ENCODE measurements at regions of chr20 and their contacts with region 1.

Region 1: GRCh38 chr20:12243327-12243726 is 325.6 kb downstream of the BTBD3 start:
- DNase-seq: no peak

Region 2: GRCh38 chr20:12207875-12208274 is 35.5 kb before region 1 on chr20:
- intact Hi-C with region 1: loop called in 1 of 2 experiments (anchors 1 kb)
- DNase-seq: no peak